ENCODE measurements at regions of chr6 and their contacts with region 1.

Region 1: DNA sequence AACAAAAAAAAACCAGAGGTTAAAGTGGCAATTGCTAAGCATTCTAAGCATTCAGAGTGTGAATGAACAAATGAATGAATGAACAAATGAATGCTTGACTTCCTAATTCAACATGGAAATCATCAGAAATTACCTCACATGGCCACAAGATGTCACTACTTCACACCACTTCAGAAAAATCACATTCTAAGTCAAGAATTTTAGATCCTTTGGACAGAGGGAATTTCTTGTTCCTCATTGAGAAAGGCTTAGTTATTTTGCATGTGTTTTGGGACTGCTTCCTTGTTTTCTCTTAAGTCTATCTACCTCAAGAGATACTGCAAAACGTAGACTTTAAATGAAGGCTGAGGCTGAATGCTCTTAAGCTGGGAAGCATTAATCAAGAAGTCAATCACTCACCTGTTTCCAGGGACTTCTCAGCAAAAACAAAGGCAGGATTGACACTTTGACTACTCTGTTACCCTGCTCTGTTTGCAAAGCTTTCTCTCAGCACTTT is 120.2 kb downstream of the MBOAT1 start:
- DNase-seq: no peak
- ATAC-seq: no peak
- H3K4me3 Mint-ChIP-seq: no peak overlapping the region
- H3K27ac Mint-ChIP-seq: no peak overlapping the region
- H3K4me1 Mint-ChIP-seq: no peaks in the 10 kb centered on the region
- H3K27me3 Mint-ChIP-seq: no peaks in the 10 kb centered on the region
- CTCF ChIP-seq: peak; percentile 70

Region 2: DNA sequence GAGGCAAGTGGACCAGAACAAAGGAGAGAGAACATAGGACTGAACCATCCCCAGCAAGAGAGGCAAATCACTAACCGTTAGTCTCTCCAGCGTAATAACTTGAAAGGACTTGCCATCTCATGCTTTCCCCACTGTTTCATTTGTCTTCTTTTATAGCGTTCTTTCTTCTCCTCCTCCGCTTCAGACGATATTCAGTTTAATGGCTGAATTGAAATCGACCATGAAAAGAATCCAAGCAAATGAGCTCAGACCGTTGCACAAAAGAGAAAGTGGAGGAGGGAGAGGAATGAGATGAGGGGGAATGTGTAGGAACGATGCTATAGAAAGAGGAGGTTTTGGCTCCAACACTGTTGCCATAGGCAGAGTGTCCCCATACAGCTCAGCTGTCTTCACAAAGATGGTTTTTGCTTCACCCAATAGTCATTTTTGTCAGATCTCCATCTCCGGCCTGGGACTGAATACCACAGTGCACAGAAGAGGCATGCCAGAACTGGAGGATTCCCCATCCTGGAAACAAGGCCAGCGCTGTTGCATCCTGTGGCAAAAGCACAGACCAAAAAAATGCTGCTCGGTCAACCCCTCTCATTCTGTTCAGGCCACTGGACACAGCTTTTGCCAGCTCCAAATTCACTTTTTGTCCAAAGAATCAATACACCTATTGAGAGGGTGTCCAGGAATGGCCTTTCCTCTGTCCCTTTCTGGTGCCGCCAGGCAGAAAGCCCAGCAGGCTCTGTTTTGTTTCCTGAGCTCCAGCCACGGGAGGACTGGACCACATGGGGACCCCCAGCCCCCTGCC is 78.9 kb before region 1 on chr6:
- CTCF ChIA-PET with region 1: no interaction called
- POLR2A ChIA-PET with region 1: no interaction called
- intact Hi-C with region 1: no loop called
- DNase-seq: no peak
- ATAC-seq: no peak
- H3K4me3 Mint-ChIP-seq: no peak overlapping the region
- H3K27ac Mint-ChIP-seq: no peak overlapping the region
- H3K4me1 Mint-ChIP-seq: no peaks in the 10 kb centered on the region
- H3K27me3 Mint-ChIP-seq: no peaks in the 10 kb centered on the region
- CTCF ChIP-seq: no peak

Region 3: DNA sequence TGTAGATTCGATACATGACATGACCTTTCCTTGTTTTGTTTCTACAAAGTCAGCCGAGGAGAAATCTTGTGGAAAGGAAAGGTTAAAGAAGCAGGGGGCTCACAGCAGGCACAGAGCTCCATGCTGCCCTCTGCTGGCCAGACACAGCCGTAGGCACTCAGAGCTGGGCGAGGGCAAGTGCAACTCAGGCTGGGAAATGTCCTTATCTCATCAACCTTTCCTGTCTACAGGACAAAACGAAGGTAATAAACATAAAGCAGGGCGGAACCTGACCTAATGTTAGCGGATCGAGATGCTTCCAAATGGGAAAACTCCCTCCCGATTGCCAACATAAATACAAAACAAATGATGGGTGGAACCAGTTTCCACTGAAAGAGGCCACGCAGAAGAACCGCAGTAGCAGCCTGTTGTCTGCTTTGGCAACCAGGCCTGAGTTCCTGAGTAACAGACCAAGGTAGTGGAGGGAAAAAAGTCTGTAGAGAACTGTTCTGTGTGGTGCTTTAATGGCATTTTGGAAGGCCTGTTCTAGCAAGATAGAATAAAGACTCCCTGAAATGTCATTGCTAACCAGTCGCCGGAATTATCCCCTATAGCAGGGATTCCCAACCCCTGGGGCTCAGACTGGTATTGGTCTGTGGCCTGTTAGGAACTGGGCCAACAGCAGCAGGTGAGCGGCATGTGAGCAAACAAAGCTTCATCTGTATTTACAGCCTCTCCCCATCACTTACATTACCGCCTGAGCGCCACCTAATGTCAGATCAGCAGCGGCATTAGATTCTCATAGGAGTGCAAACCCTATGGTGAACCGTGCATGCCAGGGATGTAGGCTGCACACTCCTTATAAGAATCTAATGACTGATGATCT is 34.9 kb after region 1 on chr6:
- CTCF ChIA-PET with region 1: interaction called, 20 read pairs
- POLR2A ChIA-PET with region 1: no interaction called
- intact Hi-C with region 1: no loop called
- DNase-seq: peak; percentile 39
- ATAC-seq: peak; percentile 50
- H3K4me3 Mint-ChIP-seq: no peak overlapping the region
- H3K27ac Mint-ChIP-seq: no peak overlapping the region
- H3K4me1 Mint-ChIP-seq: no peaks in the 10 kb centered on the region
- H3K27me3 Mint-ChIP-seq: no peaks in the 10 kb centered on the region
- CTCF ChIP-seq: peak; percentile 95

Region 4: GRCh38 chr6:20159781-20160540 is 67.8 kb after region 1 on chr6:
- CTCF ChIA-PET with region 1: no interaction called
- POLR2A ChIA-PET with region 1: no interaction called
- intact Hi-C with region 1: no loop called
- DNase-seq: no peak
- ATAC-seq: no peak
- H3K4me3 Mint-ChIP-seq: no peak overlapping the region
- H3K27ac Mint-ChIP-seq: no peak overlapping the region
- H3K4me1 Mint-ChIP-seq: no peaks in the 10 kb centered on the region
- H3K27me3 Mint-ChIP-seq: no peaks in the 10 kb centered on the region
- CTCF ChIP-seq: no peak

Region 5: GRCh38 chr6:20291764-20292580 is 199.9 kb after region 1 on chr6:
- CTCF ChIA-PET with region 1: no interaction called
- POLR2A ChIA-PET with region 1: no interaction called
- intact Hi-C with region 1: loop called (anchors 5 kb)
- DNase-seq: peak; percentile 45
- ATAC-seq: peak; percentile 93
- H3K4me3 Mint-ChIP-seq: peak overlapping the region; percentile 8
- H3K27ac Mint-ChIP-seq: no peak overlapping the region
- H3K4me1 Mint-ChIP-seq: peaks cover 3% of the 10 kb centered on the region
- H3K27me3 Mint-ChIP-seq: peaks cover 2% of the 10 kb centered on the region
- CTCF ChIP-seq: peak; percentile 83

Region 6: DNA sequence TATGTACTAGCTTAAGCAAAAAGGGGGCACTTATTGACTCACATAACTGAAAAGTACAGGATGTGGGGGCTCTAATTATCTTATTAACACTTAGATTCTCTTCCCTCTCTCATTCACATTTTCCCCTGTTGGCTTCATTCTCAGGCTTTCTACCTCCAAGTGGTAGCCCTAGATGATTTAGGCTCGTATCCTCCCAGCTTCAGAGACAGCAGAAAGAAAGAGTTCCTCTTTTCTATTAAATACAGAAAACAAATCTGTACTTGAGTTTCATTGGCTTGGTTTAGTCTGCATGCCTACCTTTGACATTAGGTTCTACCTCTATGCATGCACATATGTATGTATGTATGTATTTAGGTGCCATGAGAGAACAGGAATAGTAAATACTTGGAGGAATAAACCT is 294.1 kb after region 1 on chr6:
- CTCF ChIA-PET with region 1: no interaction called
- POLR2A ChIA-PET with region 1: no interaction called
- intact Hi-C with region 1: no loop called
- DNase-seq: no peak
- ATAC-seq: no peak
- H3K4me3 Mint-ChIP-seq: no peak overlapping the region
- H3K27ac Mint-ChIP-seq: no peak overlapping the region
- H3K4me1 Mint-ChIP-seq: no peaks in the 10 kb centered on the region
- H3K27me3 Mint-ChIP-seq: peaks cover 10% of the 10 kb centered on the region
- CTCF ChIP-seq: no peak

Measured in activated B cell treated with CpG ODN at 0.5 μM for 24 hours (primary cell).